Dorsolateral prefrontal cortex (tissue), 120 donors: ENCODE measurements at regions of chr20 and their contacts with region 1.

Region 1: DNA sequence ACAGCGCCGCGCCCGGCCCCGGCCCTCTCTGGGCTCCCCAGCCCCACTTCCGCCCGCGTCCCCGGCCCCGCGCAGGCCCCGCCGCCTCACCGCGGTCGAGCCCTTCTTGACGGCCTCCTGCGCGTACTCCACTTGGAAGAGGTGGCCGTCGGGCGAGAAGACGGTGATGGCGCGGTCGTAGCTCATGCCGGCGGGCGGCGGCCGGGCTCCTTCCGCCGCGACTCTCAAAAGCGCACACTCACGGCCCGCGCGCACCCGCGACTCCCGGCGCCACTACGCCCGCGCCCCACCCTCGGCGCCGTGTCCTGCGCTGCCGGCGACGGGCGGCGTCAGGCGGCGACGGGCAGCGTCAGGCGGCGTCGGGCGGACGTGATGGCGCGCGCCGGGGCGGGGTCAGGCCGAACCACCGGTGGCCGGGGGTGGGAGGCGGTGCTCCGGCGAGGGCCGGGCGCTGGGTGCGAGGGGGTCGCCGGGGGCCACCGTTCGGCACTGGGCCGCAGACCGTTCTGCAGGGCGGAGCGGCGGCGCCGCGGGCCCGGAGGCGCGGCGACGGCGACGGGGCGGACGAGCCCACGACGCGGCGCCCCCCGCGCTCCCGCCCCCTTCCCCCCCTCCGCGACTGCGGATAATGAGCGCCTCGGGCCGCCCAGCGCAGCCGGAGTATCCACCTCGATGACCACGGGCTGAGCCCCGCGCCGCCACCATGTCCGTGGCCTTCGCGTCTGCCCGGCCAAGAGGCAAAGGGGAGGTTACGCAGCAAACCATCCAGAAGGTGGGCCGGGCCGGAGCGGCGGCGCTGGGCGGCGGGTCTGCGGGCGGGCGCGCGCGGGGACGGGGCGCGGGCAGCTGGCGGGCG is at the starts of genes PSMA7 and SS18L1:
- DNase-seq: peak; percentile 66 to 93 (median 84)
- H3K4me3 ChIP-seq: peak within 1 kb of the TSS; percentile 61 to 98 (median 86)
- H3K27ac ChIP-seq: peak within 1 kb of the TSS in 58 of 59 donors; percentile 57 to 100 (median 94)
- H3K27me3 ChIP-seq: no peaks in the 10 kb centered on the region
- CTCF ChIP-seq: peak in 3 of 56 donors; percentile 12 to 29 (median 13)
- total RNA-seq, gene PSMA7: 92.8 to 154 (median 124) TPM
- total RNA-seq, gene SS18L1: 23.7 to 55.2 (median 35.7) TPM

Region 2: GRCh38 chr20:62121776-62122631 is 21.3 kb before region 1 on chr20 and contains the start of gene LSM14B:
- intact Hi-C with region 1: loop called (anchors 2 kb)
- DNase-seq: peak; percentile 82 to 97 (median 92)
- H3K4me3 ChIP-seq: peak within 1 kb of the TSS; percentile 61 to 97 (median 84)
- H3K27ac ChIP-seq: peak within 1 kb of the TSS; percentile 13 to 98 (median 93)
- H3K27me3 ChIP-seq: peaks cover 0 to 9% (median 0%) of the 10 kb centered on the region in 45 donors
- CTCF ChIP-seq: peak in 6 of 56 donors; percentile 7 to 29 (median 12)
- total RNA-seq, gene LSM14B: 50.8 to 92.9 (median 73.1) TPM

Region 3: DNA sequence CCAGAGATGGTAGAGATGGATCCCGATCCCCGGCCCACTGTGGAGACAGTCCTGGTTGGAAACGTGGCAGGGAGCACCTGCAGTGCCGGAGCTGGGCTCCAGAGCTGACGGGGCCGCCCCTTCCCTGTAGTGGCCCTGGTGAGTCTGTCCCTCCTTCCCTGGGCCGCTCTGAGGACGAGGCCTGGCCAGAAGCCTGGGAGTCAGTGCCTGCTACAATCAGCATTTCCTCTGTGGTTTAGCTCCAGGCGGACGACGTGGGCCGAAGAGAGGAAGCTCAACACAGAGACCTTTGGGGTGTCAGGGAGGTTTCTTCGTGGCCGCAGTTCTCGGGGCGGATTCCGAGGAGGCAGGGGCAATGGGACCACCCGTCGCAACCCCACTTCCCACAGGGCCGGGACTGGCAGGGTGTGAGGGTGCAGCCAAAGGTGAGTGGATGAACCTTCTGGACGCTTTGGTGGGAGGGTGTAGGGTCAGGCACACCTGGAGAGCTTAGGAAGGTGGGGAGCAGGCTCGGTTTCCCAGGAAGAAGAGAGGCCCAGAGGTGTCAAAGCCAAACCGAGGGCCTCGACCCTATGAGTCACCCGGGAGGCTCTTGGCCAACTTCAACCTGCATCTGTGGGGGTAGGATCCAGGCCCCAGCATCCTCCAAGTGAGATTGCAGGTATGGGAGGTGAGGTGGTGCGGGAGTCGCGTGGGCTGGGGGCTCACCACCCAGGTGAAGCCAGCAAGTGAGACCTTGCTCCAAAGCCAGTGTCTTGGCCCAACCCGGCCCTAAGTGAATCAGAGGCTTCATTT is 10.1 kb before region 1 on chr20:
- intact Hi-C with region 1: no loop called
- DNase-seq: no peak
- H3K4me3 ChIP-seq: peak overlapping the region in 5 of 59 donors; percentile 0 to 23 (median 10)
- H3K27ac ChIP-seq: peak overlapping the region in 49 of 59 donors; percentile 1 to 81 (median 56)
- H3K27me3 ChIP-seq: no peaks in the 10 kb centered on the region
- CTCF ChIP-seq: no peak

Region 4: GRCh38 chr20:62201173-62202082 is 58.1 kb after region 1 on chr20:
- intact Hi-C with region 1: no loop called
- DNase-seq: peak in 1 of 10 donors; percentile 29
- H3K4me3 ChIP-seq: no peak overlapping the region
- H3K27ac ChIP-seq: no peak overlapping the region
- H3K27me3 ChIP-seq: no peaks in the 10 kb centered on the region
- CTCF ChIP-seq: no peak